ENCODE measurements at regions of chr1 and their contacts with region 1.

Region 1: DNA sequence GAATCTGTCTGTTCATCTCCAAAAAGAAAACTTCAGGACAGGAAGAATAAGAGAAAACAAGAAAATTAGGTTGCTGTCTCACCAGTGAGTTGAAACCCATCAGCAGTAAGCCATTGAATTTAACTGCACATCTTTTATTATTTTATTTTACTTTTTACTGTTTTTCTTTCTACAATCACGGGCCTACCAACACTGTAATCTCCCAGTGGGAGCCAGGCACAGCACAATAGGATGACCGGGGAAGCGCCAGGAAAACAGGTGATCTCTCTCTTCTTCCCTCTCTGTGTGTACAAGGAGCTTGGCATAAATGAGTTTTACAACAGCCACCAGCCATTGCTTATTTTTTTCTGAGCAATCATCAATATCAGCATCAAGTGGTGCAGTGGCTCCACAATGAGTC is 113.1 kb upstream of the ESRRG start:
- DNase-seq: no peak
- H3K4me3 ChIP-seq: no peak overlapping the region
- CTCF ChIP-seq: no peak

Region 2: DNA sequence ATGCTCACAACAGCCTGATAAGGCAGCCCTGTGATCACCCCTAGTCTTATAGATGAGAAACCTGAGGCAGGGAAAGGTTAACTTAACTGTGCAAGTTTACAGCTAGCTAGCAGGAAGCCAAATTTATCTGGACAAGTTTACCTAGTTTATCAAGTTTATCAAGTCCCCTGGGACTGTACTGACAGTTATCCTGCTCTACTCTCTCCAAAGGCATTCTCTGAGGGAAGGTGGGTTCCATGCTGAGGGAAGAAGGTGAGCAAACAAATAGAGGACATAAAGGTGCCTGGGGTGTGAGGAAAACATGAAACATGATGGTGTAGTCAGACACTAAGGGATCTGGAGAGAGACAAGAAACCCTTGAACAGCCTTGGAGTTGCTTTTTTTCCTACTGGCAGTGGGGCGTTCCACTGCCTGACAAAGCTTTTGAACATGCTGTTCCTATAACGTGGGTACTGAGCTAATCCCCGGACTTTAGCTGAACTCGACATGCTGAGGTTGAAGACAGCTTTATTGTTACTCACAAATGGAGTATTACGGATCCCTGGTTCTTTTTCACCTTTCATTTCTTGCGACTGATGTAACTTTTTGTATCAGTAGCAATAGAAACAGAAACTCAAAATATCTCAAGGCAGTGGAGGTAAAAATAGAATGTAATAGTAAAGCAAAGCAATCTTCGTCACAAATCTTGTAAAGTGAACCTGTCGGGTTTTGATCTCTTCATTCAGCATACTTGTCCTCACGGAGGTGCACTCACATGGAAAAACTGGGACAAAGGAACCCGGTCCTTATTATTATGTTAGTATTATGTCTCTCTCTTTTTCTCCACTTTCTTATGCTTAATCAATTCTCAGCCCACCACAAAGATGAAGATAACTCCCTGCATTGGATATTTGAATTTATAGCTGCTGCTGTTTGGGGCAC is 70.7 kb before region 1 on chr1:
- in situ Hi-C with region 1: no loop called
- DNase-seq: no peak
- H3K4me3 ChIP-seq: no peak overlapping the region
- CTCF ChIP-seq: no peak

Region 3: GRCh38 chr1:216866714-216867113 is 30.4 kb after region 1 on chr1:
- in situ Hi-C with region 1: loop called (anchors 5 kb)
- DNase-seq: no peak
- H3K4me3 ChIP-seq: no peak overlapping the region
- CTCF ChIP-seq: no peak